B cell (primary cell): ENCODE measurements at regions of chr9 and their contacts with region 1.

Region 1: DNA sequence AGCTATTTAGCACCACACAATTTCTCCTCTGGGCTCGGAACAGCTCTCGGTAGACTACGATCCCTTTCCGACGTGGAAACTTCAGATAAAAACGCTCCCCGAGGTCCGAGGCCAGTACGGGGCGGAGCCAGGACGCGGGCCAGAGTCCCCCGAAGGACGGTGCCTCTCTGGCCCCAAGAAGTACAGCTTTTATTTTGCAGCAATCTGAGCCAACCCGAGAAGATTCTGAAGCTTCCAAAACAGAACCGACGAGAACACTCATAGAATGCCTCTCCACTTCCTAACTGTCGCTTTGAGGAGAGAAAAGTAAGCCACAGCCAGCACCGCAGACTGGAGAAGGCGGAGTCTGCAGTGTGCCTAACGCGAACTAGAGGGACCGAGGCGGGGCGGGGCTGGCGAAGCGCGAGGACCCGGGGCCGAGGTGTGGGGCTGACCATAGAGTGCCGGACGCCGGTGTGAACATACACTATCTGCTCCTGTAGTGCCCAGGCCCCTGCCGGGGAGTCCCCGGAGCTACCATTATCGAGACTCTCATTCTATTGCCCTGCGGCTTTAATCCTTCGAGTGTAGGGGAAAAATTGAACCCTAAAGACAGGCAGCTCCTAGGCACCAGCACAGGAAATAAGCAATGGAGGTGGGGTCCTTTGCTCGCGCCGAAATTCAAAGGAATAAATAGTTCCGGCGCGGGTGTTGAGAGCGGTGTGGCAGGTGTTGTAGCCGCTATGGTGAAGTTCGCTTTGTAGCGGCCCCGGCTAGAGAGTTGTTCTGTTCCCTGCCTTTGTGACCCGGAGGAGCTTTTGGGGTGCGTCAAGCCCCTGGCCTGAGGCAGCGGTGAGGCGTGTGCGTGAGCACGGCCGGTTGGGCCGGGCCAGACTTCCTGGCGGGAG is at the start of gene SMC2:
- DNase-seq: peak; percentile 97
- ATAC-seq: peak; percentile 98
- H3K4me3 ChIP-seq: peak within 1 kb of the TSS; percentile 62 to 97 (median 80)
- H3K4me3 Mint-ChIP-seq: peak within 1 kb of the TSS; percentile 99
- H3K27ac ChIP-seq: peak within 1 kb of the TSS; percentile 97 to 98
- H3K27ac Mint-ChIP-seq: peak within 1 kb of the TSS; percentile 100
- H3K4me1 ChIP-seq: peaks cover 16 to 17% of the 10 kb centered on the region in 2 donors
- H3K4me1 Mint-ChIP-seq: peaks cover 36% of the 10 kb centered on the region
- H3K27me3 ChIP-seq: no peaks in the 10 kb centered on the region
- H3K27me3 Mint-ChIP-seq: no peaks in the 10 kb centered on the region
- CTCF ChIP-seq: no peak
- total RNA-seq, gene SMC2: 9.3 and 10.6 TPM in 2 replicates

Region 2: DNA sequence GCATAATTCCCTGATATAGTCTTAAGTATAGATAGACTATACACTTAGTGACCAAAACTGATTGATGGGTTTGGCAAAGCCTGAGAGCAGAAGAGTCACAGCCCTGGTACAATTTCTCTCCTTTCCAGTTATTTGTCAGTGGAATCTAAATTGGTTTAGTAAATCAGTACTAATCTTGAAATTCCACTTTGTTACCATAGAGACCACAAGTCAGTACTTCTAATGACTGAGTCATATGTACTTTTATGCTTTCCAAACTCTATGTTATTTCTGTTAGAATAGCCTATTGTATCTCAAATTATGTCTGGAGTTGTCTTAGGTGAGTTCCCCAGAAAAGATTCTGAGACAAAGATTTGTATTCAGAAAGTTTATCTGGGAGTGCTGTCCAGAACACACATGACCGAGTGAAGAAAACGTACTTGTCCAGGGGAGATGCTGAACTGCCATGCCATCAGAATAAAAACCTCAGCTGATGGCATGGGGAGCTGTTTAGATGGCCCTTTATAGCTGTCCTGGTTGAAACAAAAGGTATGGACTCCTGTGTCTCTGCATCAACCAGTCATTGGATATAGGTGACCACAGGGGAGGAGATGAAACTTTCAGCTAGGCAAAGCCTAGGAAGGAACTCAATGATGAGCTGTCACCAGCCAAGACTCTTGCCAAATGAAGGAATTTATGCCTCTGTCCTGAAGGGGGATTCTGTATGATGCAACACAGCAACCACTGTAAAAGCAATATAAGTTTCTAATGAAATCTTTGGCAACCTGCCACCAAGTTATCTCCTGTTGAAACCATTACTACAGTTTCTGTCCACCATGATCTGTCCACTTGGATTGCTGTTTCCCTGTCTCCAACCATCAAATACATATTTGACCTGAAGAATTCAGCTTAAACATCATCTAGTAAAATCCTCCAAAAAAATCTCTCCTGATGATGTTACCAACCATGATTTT is 17.8 kb before region 1 on chr9:
- CTCF ChIA-PET with region 1: no interaction called
- POLR2A ChIA-PET with region 1: no interaction called
- intact Hi-C with region 1: no loop called
- DNase-seq: no peak
- ATAC-seq: no peak
- H3K4me3 ChIP-seq: no peak overlapping the region
- H3K4me3 Mint-ChIP-seq: no peak overlapping the region
- H3K27ac ChIP-seq: no peak overlapping the region
- H3K27ac Mint-ChIP-seq: no peak overlapping the region
- H3K4me1 ChIP-seq: no peaks in the 10 kb centered on the region
- H3K4me1 Mint-ChIP-seq: no peaks in the 10 kb centered on the region
- H3K27me3 ChIP-seq: no peaks in the 10 kb centered on the region
- H3K27me3 Mint-ChIP-seq: peaks cover 40% of the 10 kb centered on the region
- CTCF ChIP-seq: no peak

Region 3: GRCh38 chr9:104177003-104177611 is 83.2 kb after region 1 on chr9:
- CTCF ChIA-PET with region 1: no interaction called
- POLR2A ChIA-PET with region 1: no interaction called
- intact Hi-C with region 1: no loop called
- DNase-seq: peak; percentile 9
- ATAC-seq: no peak
- H3K4me3 ChIP-seq: no peak overlapping the region
- H3K4me3 Mint-ChIP-seq: no peak overlapping the region
- H3K27ac ChIP-seq: no peak overlapping the region
- H3K27ac Mint-ChIP-seq: no peak overlapping the region
- H3K4me1 ChIP-seq: no peaks in the 10 kb centered on the region
- H3K4me1 Mint-ChIP-seq: no peaks in the 10 kb centered on the region
- H3K27me3 ChIP-seq: no peaks in the 10 kb centered on the region
- H3K27me3 Mint-ChIP-seq: peaks cover 8% of the 10 kb centered on the region
- CTCF ChIP-seq: peak; percentile 20

Region 4: DNA sequence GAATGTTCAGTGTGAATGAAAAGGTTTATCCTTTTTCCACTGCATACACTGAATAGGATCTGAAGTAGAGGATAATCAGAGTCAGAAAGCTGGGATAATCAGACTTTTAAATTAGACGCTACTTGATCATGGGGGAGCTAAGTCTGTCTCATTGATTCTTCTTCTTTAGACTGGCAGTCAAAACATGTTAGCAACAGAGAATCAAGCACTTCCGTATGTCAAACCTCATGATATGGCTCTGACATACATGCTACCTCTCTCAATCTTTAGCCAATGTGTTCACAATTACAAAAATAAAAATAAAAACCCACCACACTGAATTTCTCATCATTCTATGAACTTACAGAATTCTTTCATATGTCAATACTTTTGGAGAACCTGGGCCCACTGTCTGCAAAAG is 391.1 kb after region 1 on chr9:
- CTCF ChIA-PET with region 1: no interaction called
- POLR2A ChIA-PET with region 1: no interaction called
- intact Hi-C with region 1: no loop called
- DNase-seq: no peak
- ATAC-seq: no peak
- H3K4me3 ChIP-seq: no peak overlapping the region
- H3K4me3 Mint-ChIP-seq: no peak overlapping the region
- H3K27ac ChIP-seq: no peak overlapping the region
- H3K27ac Mint-ChIP-seq: no peak overlapping the region
- H3K4me1 ChIP-seq: no peaks in the 10 kb centered on the region
- H3K4me1 Mint-ChIP-seq: no peaks in the 10 kb centered on the region
- H3K27me3 ChIP-seq: no peaks in the 10 kb centered on the region
- H3K27me3 Mint-ChIP-seq: no peaks in the 10 kb centered on the region
- CTCF ChIP-seq: no peak

Region 5: DNA sequence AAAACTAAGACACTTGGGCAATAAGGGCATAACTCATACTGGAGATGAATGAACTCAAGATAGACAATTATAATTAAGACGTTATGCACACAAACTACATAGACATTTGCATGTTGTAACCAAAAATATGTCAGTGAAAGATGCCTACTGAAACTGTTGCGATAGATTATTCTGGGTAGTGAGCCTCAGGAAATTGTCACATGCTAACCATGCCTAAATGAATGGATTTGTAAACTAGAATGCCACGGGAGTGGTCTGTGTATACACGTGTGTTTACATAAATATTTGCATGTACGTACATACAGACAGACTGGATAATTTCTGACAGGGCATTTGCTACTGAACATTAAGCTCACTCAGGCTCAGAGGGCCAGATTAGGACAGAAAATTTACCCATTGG is 671.2 kb after region 1 on chr9:
- CTCF ChIA-PET with region 1: no interaction called
- POLR2A ChIA-PET with region 1: no interaction called
- intact Hi-C with region 1: loop called (anchors 5 kb)
- DNase-seq: peak; percentile 50
- ATAC-seq: peak; percentile 3
- H3K4me3 ChIP-seq: peak overlapping the region in 3 of 5 experiments; percentile 77 to 91 (median 89)
- H3K4me3 Mint-ChIP-seq: peak overlapping the region; percentile 95
- H3K27ac ChIP-seq: peak overlapping the region; percentile 3 to 89
- H3K27ac Mint-ChIP-seq: peak overlapping the region; percentile 96
- H3K4me1 ChIP-seq: peaks cover 16 to 23% of the 10 kb centered on the region in 2 donors
- H3K4me1 Mint-ChIP-seq: peaks cover 30% of the 10 kb centered on the region
- H3K27me3 ChIP-seq: no peaks in the 10 kb centered on the region
- H3K27me3 Mint-ChIP-seq: no peaks in the 10 kb centered on the region
- CTCF ChIP-seq: no peak

Region 6: DNA sequence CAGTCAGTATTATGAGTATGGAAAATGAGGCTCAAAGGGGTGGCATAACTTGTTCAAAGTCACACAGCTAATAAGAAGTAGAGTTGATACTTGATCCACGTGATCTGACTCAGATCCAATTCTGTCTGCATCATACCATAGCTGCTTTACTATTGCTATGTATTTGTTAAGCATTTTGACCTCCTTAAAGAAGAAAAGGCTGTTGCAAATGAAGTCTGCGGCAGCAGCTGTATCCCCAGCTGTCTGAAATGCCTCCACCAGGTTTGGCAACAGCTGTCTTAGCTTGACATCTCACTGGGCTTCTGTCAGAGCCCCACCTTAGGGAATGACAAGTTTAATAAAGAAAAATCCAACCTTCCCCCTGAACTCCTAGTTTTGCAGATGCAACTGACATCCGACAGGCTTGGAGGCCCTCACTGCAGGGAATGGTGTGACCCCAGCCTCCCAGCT is 1075.0 kb after region 1 on chr9:
- CTCF ChIA-PET with region 1: no interaction called
- POLR2A ChIA-PET with region 1: no interaction called
- intact Hi-C with region 1: no loop called
- DNase-seq: no peak
- ATAC-seq: no peak
- H3K4me3 ChIP-seq: no peak overlapping the region
- H3K4me3 Mint-ChIP-seq: no peak overlapping the region
- H3K27ac ChIP-seq: no peak overlapping the region
- H3K27ac Mint-ChIP-seq: no peak overlapping the region
- H3K4me1 ChIP-seq: no peaks in the 10 kb centered on the region
- H3K4me1 Mint-ChIP-seq: no peaks in the 10 kb centered on the region
- H3K27me3 ChIP-seq: no peaks in the 10 kb centered on the region
- H3K27me3 Mint-ChIP-seq: peaks cover 9% of the 10 kb centered on the region
- CTCF ChIP-seq: no peak

Region 7: DNA sequence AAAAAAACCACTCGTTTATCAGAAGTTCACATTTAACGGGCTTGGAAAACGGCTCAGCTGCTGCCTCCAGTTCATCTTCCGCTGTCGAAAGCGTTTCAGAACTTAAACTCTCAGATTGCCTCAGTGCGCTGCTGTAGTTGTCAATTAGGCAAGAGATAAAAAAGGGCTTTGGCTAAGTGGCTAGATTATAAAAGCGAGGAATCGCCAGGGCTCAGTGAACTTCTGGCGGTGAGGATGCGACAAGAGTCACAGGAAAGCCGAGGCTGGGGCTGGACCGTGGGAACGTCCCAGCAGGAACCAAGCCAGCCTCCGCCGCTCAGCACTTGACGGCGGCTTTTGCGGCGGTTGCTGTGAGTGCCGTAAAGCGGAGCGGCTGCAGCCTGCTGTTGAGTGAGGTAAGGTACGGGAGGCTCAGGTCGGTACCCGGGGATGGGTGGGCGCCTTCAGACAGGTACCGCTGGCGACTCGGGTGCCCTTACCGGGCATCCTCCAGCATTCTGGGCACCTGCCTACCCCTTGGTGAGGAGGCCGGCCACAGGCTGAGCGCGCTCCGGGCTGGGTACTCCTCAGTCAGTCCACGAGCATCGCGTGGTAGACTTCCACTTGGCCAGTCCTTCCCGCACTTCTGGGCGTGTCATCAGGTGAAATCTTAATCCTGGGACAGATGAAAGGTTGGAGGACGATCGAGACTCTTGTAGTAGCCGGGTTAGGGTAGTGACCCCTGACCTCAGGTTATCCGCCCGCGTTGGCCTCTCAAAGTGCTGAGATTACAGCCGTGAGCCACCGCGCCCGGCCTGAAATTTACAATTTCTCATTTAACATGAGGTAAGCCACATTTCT is 1464.1 kb after region 1 on chr9 and contains the start of gene FKTN:
- CTCF ChIA-PET with region 1: no interaction called
- POLR2A ChIA-PET with region 1: no interaction called
- intact Hi-C with region 1: loop called (anchors 5 kb)
- DNase-seq: peak; percentile 87
- ATAC-seq: peak; percentile 98
- H3K4me3 ChIP-seq: peak within 1 kb of the TSS; percentile 76 to 99 (median 77)
- H3K4me3 Mint-ChIP-seq: peak within 1 kb of the TSS; percentile 98
- H3K27ac ChIP-seq: peak within 1 kb of the TSS; percentile 38 to 74
- H3K27ac Mint-ChIP-seq: peak within 1 kb of the TSS; percentile 92
- H3K4me1 ChIP-seq: peaks cover 7 to 8% of the 10 kb centered on the region in 2 donors
- H3K4me1 Mint-ChIP-seq: peaks cover 19% of the 10 kb centered on the region
- H3K27me3 ChIP-seq: no peaks in the 10 kb centered on the region
- H3K27me3 Mint-ChIP-seq: no peaks in the 10 kb centered on the region
- CTCF ChIP-seq: no peak
- total RNA-seq, gene FKTN: 16.2 and 18.3 TPM in 2 replicates